OCI-LY7 (cell line): ENCODE measurements at regions of chr12 and their contacts with region 1.

Region 1: DNA sequence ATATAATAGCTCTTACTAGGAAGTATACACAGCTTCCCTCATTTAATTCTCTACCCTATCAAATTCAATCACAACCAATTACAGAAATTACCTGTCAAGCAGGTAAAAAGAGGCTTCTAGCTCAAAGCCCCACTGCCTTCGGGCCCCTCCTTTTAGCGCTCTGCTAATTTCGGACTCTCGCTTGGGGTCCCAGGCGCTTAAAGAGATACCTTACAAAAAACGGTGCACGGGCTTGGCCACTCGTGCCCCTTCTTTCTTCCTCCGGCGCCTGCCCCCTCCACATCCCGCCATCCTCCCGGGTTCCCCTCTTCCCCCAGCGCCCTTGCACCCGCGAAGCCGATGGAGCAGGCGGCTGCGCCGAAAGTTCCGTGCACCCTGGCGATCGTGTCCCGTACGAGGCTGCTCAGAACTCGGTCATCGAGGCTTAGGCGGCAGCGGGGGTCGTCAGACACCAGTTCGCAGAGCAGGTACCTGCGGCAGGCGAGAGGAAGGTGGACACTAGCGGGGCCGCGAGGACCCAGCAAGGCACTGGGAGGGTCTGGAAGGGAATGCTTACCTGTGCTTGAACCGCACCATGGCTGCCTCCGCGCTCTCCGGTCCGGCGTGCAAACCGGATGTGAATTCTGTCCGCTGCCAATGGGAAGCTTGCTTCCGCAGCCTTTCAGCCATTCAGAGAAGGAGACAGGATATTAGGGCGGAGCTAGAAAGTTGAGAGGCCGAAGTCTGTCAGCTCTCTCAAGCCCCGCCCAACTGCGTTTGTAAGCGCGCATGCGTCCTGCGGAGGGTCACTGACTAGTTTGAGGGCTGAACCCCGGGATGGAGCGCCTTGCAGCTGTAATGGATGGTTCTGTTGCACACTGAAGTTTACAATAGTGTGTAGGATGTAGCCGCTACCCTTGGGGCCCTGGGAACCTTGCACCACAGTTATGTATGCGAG is at the start of gene POP5:
- DNase-seq: peak; percentile 99
- H3K4me3 ChIP-seq: peak within 1 kb of the TSS; percentile 81
- H3K27ac ChIP-seq: peak within 1 kb of the TSS; percentile 33
- H3K4me1 ChIP-seq: peaks cover 17% of the 10 kb centered on the region
- CTCF ChIP-seq: no peak
- total RNA-seq, gene POP5: 65.8 and 73.4 TPM in 2 replicates

Region 2: GRCh38 chr12:120324841-120325417 is 256.1 kb before region 1 on chr12:
- CTCF ChIA-PET with region 1: no interaction called
- POLR2A ChIA-PET with region 1: interaction called, 3 read pairs
- intact Hi-C with region 1: loop called (anchors 1 kb)
- DNase-seq: no peak
- H3K4me3 ChIP-seq: no peak overlapping the region
- H3K27ac ChIP-seq: no peak overlapping the region
- H3K4me1 ChIP-seq: peaks cover 4% of the 10 kb centered on the region
- CTCF ChIP-seq: no peak

Region 3: GRCh38 chr12:120514002-120514401 is 67.1 kb before region 1 on chr12:
- CTCF ChIA-PET with region 1: no interaction called
- POLR2A ChIA-PET with region 1: no interaction called
- intact Hi-C with region 1: no loop called
- DNase-seq: no peak
- H3K4me3 ChIP-seq: no peak overlapping the region
- H3K27ac ChIP-seq: no peak overlapping the region
- H3K4me1 ChIP-seq: no peaks in the 10 kb centered on the region
- CTCF ChIP-seq: no peak

Region 4: GRCh38 chr12:120686690-120687577 is 105.9 kb after region 1 on chr12 and contains the start of gene MLEC:
- CTCF ChIA-PET with region 1: no interaction called
- POLR2A ChIA-PET with region 1: interaction called, 3 read pairs
- intact Hi-C with region 1: loop called (anchors 1 kb)
- DNase-seq: peak; percentile 99
- H3K4me3 ChIP-seq: peak within 1 kb of the TSS; percentile 91
- H3K27ac ChIP-seq: peak within 1 kb of the TSS; percentile 94
- H3K4me1 ChIP-seq: peaks cover 56% of the 10 kb centered on the region
- CTCF ChIP-seq: peak; percentile 65
- total RNA-seq, gene MLEC: 69.7 and 74.1 TPM in 2 replicates

Region 5: DNA sequence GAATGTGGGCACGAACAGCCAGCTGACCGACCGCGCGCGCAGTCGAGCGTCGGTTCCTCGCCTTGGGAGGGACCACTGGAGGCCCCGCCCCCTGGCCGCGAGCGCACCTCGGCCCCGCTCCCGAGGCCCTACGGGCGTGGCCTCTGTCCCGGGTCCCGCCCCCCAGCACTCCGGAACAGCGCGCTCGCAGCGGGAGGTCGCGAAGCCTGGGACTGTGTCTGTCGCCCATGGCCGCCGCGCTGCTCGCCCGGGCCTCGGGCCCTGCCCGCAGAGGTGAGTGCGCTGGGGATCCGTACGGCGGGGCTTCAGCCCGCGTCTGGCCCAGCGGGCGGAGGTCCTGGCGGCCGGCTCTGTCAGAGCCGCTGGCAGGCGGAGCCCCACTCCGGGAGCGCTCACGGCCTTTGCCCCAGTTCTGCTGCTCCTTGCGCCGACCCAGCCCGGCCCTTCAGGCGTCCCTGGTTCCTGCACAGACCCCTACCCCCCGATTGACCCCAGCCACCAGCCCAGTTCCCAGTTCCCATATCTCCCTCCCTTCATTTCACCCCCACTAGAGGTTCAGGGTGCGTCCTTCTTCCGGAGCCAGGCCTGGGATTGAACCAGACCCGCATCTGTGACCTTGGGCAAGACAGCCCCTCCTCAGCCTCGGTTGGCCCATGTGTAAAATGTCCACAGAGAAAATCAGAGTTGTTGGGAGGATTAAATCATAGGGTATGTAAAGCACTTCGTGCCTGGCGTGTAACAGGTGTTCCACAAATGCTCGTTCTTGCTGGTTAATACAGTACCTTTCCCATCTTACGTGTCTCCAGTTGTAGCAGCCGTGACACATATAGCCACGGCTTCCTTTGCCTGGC is 144.8 kb after region 1 on chr12 and contains the start of gene ACADS:
- CTCF ChIA-PET with region 1: no interaction called
- POLR2A ChIA-PET with region 1: no interaction called
- intact Hi-C with region 1: loop called (anchors 5 kb)
- DNase-seq: peak; percentile 90
- H3K4me3 ChIP-seq: peak within 1 kb of the TSS; percentile 64
- H3K27ac ChIP-seq: no peak within 1 kb of the TSS
- H3K4me1 ChIP-seq: peaks cover 33% of the 10 kb centered on the region
- CTCF ChIP-seq: no peak
- total RNA-seq, gene ACADS: 7.7 and 8.8 TPM in 2 replicates

Region 6: DNA sequence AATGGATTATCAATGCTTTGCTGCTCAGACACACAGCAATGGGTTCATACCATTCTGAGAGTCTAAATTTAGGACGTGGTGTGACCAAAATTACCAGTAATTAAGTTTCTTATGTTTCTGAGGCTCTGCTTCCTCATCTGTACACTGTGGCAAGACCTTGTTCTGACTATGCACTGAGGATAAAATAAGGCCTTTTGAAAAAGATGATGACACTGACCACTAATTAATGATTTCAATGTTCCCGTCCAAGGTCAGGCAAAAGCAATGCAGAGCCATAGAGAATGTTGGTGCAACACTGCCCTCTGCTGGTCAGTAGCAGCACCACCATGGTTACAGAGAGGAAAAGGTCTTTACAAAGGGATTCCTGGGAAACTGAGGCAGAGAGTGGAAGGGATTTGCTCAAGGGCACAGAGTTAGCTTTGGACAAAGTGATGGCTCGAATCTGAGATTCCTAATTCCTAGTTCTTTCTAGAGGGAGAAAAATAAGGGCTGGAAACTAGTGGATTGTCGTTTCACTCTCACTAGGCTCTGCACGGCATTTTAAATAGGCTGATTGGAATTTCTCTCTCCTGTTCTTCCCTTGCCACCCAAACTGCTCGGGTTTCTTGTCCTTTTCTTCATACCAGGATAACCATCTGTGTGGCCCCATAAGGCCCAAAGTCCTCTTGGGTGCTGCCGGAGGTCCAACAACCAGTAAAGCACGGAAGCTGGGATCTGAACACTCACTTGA is 529.3 kb after region 1 on chr12:
- CTCF ChIA-PET with region 1: no interaction called
- POLR2A ChIA-PET with region 1: no interaction called
- intact Hi-C with region 1: loop called (anchors 5 kb)
- DNase-seq: peak; percentile 69
- H3K4me3 ChIP-seq: no peak overlapping the region
- H3K27ac ChIP-seq: no peak overlapping the region
- H3K4me1 ChIP-seq: no peaks in the 10 kb centered on the region
- CTCF ChIP-seq: peak; percentile 99